Left colon (tissue), 2 donors: ENCODE measurements at regions of chr9 and their contacts with region 1.

Region 1: DNA sequence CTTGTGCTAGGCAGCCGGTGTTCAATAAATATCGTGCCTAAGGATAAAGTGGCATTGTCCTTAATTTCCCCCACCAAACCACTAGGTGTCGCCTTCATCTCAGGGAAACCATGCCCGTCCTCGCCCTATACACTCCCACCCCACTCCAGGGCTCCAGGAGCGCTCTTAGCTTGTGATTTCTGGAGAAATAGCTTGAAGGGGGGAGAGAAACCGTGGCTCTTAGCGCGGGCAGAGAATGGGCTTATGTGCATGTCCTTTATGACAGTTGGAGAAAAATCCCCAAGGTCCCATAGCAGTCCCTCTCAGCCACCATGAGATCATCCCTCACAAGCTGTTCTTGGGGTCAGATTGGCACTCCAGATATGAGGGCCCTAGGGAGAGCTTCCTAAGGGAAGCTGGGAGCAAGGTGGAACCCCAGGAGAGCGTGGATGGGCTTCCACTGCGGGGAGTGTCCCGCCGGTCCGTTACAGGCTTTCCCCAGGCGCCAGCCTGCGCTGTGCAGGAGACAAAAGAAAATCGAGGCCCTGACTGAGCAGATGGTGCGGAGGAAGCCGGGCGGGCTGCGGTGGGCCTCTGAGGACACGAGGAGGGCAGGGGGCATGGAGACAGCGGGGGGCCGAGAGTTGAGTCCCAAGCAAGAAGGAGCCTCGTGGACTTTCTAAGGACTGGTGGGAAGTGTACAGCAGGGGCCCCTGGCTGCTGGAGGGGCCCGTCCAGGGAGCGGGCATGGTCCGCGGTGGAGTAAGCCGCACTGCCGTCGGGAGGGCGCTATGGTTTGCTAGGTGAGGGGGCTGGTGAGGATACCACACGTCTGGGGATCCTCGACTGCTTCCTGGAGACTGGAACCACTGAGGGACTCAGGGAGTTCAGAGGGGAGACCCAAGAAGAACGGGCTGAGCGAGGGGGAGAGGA is 750 bp upstream of the NPR2 start:
- DNase-seq: peak; percentile 57 to 62
- ATAC-seq: peak; percentile 92

Region 2: DNA sequence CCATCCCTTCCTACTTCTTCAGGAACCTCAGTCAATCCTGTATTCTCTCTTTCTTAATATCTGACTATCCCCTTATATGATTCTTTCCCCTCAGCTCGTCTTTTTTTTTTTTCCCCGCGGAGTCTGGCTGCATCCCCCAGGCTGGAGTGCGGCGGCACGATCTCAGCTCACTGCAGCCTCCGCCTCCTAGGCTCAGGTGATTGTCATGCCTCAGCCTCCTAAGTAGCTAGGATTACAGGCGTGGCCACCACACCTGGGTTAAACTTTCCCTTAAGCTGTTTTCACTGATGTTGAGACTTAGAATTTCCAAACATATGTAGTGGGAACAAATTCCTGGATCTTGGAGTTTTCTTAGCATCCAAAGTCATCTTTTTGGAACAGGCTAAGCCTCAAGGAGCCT is 314.0 kb before region 1 on chr9:
- intact Hi-C with region 1: no loop called
- DNase-seq: no peak
- ATAC-seq: peak; percentile 30

Region 3: GRCh38 chr9:35826071-35826701 is 35.5 kb after region 1 on chr9:
- intact Hi-C with region 1: loop called in 1 of 2 experiments (anchors 2 kb)
- DNase-seq: no peak
- ATAC-seq: peak; percentile 44

Region 4: GRCh38 chr9:35859990-35860339 is 69.3 kb after region 1 on chr9:
- intact Hi-C with region 1: loop called in 1 of 2 experiments (anchors 10 kb)
- DNase-seq: no peak
- ATAC-seq: no peak

Region 5: DNA sequence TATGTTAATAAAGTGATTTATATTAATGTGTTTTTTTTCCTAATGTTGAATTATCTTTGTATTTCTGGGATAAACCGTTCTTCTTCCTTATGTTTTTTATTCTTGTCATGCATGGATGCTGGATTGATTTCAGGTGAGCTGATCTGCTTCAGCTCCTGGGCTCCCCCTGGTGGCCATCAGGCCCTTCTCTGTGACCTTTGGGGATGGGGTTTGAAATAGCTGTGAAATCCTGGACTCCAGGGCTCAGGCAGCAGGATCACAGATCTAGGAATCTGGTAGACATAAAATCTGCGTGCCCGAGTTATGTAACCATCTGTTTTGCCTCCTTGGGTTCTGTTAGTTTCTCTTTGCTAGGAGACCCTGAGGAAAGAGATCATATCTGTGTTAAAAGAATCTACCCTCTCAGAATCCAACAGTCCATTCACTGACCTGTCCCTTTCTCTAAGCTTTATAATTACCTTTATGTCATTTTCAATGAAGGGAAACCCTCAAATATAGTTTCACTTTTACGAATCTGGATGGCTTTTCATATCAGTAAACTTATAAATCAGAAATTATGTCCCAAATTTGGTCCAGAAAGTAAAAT is 91.7 kb after region 1 on chr9:
- intact Hi-C with region 1: loop called in 1 of 2 experiments (anchors 5 kb)
- DNase-seq: peak; percentile 67 to 92
- ATAC-seq: peak; percentile 89